SK-N-SH (cell line): ENCODE measurements at regions of chr17 and their contacts with region 1.

Region 1: DNA sequence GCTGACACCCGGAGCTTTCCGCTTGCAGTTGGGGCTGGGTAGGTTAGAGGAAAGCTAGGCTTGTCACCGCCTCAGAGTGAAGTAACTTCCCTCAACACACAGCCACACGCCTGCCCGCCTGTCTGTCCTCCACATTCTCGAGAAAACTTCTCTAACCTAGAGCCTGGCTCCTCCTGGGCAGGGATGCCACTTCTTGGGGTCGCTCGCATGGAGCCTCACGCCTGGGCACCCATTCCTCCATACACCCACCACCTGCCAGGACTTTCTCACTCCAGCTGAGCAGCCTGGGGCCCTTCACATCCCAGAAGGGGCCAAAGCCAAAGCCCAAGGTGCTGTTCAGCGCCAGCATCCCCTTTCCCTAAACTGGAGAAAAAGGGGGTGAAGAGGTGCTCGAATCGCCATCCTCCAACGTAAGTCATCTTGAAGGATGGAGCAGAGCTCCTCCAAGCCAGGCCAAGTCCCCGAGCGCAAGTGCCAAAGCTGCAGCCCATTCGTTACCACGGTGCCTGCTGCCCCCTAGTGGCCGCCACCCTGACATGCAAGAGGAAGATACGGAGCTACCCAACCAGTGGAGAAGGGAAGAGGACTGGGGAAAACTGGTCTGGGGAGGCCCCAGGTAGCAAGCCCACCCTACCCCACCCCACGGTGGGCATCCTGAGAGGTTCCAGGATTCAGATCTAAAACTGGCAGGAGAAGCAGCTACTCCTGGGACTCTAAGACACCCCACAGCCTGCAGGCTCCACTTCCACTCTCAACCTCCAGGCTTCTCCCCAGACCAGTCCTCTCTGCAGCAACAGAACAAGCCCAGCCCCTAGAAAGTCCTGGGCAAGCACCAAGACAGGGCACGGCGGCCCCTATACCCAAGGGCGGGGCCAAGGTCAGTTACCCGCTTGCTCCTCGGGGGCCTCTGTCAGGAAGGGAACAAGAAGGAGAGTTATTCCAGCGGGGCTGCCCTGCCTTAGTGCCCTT is 63.1 kb downstream of the MYO18A start:
- DNase-seq: peak; percentile 85
- H3K4me3 ChIP-seq: no peak overlapping the region; a peak in 1 of 4 replicates
- H3K27ac ChIP-seq: no peak overlapping the region
- H3K4me1 ChIP-seq: peaks cover 0 to 19% of the 10 kb centered on the region in 2 experiments; a peak in 1 of 4 replicates
- H3K27me3 ChIP-seq: no peaks in the 10 kb centered on the region
- CTCF ChIP-seq: peak; percentile 89
- EP300 ChIP-seq: no peak
- RAD21 ChIP-seq: peak; percentile 84

Region 2: DNA sequence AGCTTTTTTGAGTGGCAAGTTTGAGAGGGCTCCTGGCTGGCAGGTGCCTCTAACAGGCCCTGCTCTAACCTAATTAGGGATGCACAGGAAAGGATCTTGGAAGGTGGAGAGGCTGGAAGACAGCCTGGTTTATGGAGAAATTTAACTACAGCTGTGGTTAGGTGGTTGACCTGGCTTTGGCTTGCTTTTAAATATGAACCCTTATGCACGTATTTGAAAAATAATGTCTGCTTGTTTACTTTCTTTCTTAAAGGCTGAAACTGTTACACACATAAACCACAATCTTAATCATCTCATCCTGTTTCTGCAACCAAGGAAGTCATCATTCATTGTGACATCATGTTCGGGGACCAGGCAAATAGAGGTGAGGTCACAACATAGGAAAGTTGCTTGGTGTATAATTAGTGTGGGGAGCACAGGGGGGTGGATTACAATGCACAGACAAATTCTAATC is 191.1 kb before region 1 on chr17:
- CTCF ChIA-PET with region 1: interaction called, 10 read pairs
- POLR2A ChIA-PET with region 1: no interaction called
- DNase-seq: no peak
- H3K4me3 ChIP-seq: peak overlapping the region in 1 of 2 experiments; percentile 12; a peak in 1 of 4 replicates
- H3K27ac ChIP-seq: peak overlapping the region in 1 of 2 experiments; percentile 60; a peak in 2 of 4 replicates
- H3K4me1 ChIP-seq: peaks cover 10 to 16% of the 10 kb centered on the region in 2 experiments; a peak in 2 of 4 replicates
- H3K27me3 ChIP-seq: no peaks in the 10 kb centered on the region
- CTCF ChIP-seq: no peak
- EP300 ChIP-seq: no peak
- RAD21 ChIP-seq: no peak

Region 3: GRCh38 chr17:28982131-28982951 is 134.7 kb before region 1 on chr17:
- CTCF ChIA-PET with region 1: interaction called, 23 read pairs
- POLR2A ChIA-PET with region 1: no interaction called
- DNase-seq: no peak
- H3K4me3 ChIP-seq: no peak overlapping the region
- H3K27ac ChIP-seq: no peak overlapping the region
- H3K4me1 ChIP-seq: peaks cover 12 to 25% of the 10 kb centered on the region in 2 experiments; a peak in 2 of 4 replicates
- H3K27me3 ChIP-seq: peaks cover 4% of the 10 kb centered on the region; the same call in 1 of the 2 replicates
- CTCF ChIP-seq: no peak
- EP300 ChIP-seq: no peak
- RAD21 ChIP-seq: no peak

Region 4: GRCh38 chr17:29018788-29019474 is 98.2 kb before region 1 on chr17:
- CTCF ChIA-PET with region 1: interaction called, 18 read pairs
- POLR2A ChIA-PET with region 1: no interaction called
- DNase-seq: no peak
- H3K4me3 ChIP-seq: no peak overlapping the region
- H3K27ac ChIP-seq: no peak overlapping the region
- H3K4me1 ChIP-seq: peaks cover 0 to 5% of the 10 kb centered on the region in 2 experiments; a peak in 1 of 4 replicates
- H3K27me3 ChIP-seq: peaks cover 31% of the 10 kb centered on the region
- CTCF ChIP-seq: no peak
- EP300 ChIP-seq: no peak
- RAD21 ChIP-seq: no peak

Region 5: DNA sequence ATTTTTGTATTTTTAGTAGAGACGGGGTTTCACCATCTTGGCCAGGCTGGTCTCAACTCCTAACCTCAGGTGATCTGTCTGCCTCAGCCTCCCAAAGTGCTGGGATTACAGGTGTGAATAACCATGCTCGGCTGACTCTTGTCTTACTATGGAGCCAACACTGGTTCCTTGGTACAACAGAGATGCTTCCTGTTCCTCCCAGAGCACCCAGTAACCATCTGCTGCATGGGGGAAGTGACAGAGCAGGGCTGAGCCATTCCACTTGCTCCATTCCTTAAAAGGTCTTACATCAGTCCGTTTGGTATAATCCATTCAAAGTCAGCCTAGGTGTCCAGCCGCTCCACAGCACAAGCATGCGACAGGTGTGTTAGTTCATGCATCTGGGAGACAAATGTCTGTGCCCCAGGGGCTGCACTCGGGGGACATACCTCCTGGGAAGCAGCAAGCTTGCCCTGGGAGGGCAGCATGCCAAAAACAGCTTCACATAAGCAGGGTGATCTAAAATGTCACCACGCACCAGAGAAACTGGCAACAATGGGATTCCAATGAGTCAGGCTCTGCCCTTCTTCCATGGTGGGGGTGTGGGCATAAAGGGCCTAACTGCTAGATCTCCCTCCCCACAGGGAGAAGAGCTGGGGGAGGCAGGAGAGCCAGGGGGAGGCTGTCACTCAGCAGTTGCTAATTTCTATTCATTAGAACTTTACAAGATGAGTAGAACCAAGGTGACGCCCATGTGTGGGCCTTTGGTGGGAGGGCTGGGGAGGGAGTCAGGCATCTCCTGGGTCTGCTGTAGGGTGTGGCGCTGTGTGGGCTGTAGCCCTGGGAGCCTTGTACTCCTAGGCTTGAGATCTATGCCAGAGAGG is 38.7 kb before region 1 on chr17:
- CTCF ChIA-PET with region 1: interaction called, 31 read pairs
- POLR2A ChIA-PET with region 1: no interaction called
- DNase-seq: no peak
- H3K4me3 ChIP-seq: no peak overlapping the region
- H3K27ac ChIP-seq: no peak overlapping the region
- H3K4me1 ChIP-seq: peaks cover 0 to 12% of the 10 kb centered on the region in 2 experiments; a peak in 1 of 4 replicates
- H3K27me3 ChIP-seq: no peaks in the 10 kb centered on the region
- CTCF ChIP-seq: no peak
- EP300 ChIP-seq: no peak
- RAD21 ChIP-seq: no peak

Region 6: DNA sequence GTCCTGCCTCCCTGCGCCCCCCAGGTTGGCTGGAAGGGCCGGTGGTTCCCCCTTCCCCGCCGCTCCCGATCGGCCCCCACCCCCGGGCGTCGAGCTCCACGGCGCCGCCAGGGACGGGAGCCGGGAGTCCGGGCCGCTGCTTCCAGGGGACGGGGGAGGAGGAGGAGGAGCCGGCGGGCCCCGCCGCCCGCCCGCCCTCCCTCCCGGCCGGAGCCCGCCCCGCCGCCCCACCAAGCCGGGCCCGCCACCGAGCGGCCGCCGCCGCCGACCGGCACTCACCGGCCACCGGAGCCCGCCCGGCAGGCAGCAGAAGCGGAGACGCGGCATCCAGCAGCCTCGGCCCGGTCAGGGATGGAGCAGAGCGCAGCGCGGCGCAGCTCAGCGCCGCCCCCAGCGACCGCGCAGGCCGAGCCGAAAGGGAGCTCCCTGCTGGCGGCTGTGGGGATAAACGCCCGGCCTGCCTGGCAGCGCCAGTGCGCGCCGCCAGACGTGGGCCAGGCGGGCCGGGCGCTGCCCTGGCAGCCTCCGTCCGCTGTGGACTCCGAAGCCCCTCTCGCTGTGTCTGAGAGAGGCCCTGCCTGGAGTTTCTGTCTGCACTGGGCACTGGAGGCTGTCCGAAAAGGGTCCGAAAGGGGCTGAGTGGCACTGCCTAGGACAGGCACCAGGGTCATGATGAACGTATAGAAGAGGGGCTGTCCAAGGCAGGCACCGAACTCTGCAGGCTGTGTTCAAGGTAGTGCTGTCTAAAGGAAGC is 63.1 kb after region 1 on chr17 and contains the start of gene MYO18A:
- CTCF ChIA-PET with region 1: interaction called, 20 read pairs
- POLR2A ChIA-PET with region 1: no interaction called
- DNase-seq: peak; percentile 96
- H3K4me3 ChIP-seq: peak within 1 kb of the TSS; percentile 59 to 64
- H3K27ac ChIP-seq: peak within 1 kb of the TSS; percentile 51 to 80
- H3K4me1 ChIP-seq: peaks cover 17 to 36% of the 10 kb centered on the region in 2 experiments; a peak in 1 of 4 replicates
- H3K27me3 ChIP-seq: no peaks in the 10 kb centered on the region
- CTCF ChIP-seq: peak; percentile 67
- EP300 ChIP-seq: no peak
- RAD21 ChIP-seq: peak; percentile 55
- polyA plus RNA-seq, gene MYO18A: 6.0 and 6.6 TPM in 2 replicates